Spleen (tissue), 13 donors: ENCODE measurements at regions of chr2 and their contacts with region 1.

Region 1: GRCh38 chr2:195649629-195650190 is 7.3 kb upstream of the SLC39A10 start:
- DNase-seq: no peak
- H3K4me3 ChIP-seq: peak overlapping the region in 1 of 8 donors; percentile 19
- H3K27ac ChIP-seq: peak overlapping the region; percentile 44 to 85 (median 78)
- H3K4me1 ChIP-seq: peaks cover 5 to 70% (median 30%) of the 10 kb centered on the region in 6 donors
- H3K27me3 ChIP-seq: no peaks in the 10 kb centered on the region
- CTCF ChIP-seq: no peak
- POLR2A ChIP-seq: no peak

Region 2: GRCh38 chr2:195608768-195609454 is 40.8 kb before region 1 on chr2:
- intact Hi-C with region 1: loop called (anchors 5 kb)
- DNase-seq: no peak
- H3K4me3 ChIP-seq: no peak overlapping the region
- H3K27ac ChIP-seq: no peak overlapping the region
- H3K4me1 ChIP-seq: peaks cover 0 to 19% (median 4%) of the 10 kb centered on the region in 6 donors
- H3K27me3 ChIP-seq: no peaks in the 10 kb centered on the region
- CTCF ChIP-seq: no peak
- POLR2A ChIP-seq: no peak